ENCODE measurements at regions of chr2 and their contacts with region 1.

Region 1: GRCh38 chr2:17680119-17680518 is 73.5 kb downstream of the SMC6 start:
- DNase-seq: no peak
- ATAC-seq: no peak
- H3K4me3 Mint-ChIP-seq: no peak overlapping the region
- H3K27ac Mint-ChIP-seq: no peak overlapping the region
- H3K4me1 Mint-ChIP-seq: no peaks in the 10 kb centered on the region
- H3K27me3 Mint-ChIP-seq: no peaks in the 10 kb centered on the region

Region 2: GRCh38 chr2:17719562-17720371 is 39.6 kb after region 1 on chr2:
- CTCF ChIA-PET with region 1: interaction called, 11 read pairs
- POLR2A ChIA-PET with region 1: no interaction called
- DNase-seq: no peak
- ATAC-seq: no peak
- H3K4me3 Mint-ChIP-seq: no peak overlapping the region
- H3K27ac Mint-ChIP-seq: no peak overlapping the region
- H3K4me1 Mint-ChIP-seq: no peaks in the 10 kb centered on the region
- H3K27me3 Mint-ChIP-seq: no peaks in the 10 kb centered on the region

Measured in activated CD8-positive, alpha-beta T cell treated with anti-CD3 and anti-CD28 coated beads, Interleukin-2, amount 10 ng/mL, durations not matched to agents 7 days and 5 days (primary cell).